Posterior cingulate gyrus (tissue), 11 donors: ENCODE measurements at regions of chr1 and their contacts with region 1.

Region 1: DNA sequence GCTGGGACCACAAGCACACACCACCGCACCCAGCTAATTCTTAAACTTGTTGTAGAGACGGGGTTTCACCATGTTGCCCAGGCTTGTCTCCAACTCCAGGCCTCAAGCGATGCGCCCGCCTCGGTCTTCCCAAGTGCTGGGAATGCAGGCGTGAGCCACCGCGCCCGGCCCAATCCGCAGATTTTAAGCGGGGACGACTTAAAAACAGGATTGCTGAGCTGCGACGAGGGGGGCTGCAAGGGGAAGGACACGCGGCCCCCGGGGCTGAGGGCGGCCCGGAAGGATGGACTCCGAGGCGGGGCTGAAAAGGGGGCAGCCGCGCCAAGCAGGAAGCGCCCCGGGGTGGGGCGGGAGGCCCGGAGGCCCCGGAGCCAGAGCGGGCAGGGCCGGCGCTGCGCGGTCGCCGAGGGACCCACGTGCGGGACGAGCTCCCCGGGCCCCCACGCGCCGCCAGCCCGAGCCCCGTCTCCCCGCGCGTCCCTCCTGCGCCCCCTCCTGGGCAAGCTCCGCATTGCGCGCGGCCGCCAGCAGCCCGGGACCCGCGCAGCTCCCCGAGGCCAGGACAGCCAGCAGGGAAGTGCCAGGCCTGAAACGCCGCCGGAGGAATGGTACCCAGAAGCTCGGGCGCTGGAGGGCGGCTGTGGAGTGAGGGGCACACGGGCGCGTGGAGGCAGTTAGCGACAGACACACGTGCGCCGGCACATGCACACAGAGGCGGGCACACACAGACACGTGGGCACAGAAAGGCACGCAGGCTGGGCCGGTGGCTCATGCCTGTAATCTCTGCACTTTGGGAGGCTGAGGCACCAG is 5.5 kb upstream of the PRKCZ start:
- DNase-seq: peak; percentile 64 to 96 (median 78)

Region 2: DNA sequence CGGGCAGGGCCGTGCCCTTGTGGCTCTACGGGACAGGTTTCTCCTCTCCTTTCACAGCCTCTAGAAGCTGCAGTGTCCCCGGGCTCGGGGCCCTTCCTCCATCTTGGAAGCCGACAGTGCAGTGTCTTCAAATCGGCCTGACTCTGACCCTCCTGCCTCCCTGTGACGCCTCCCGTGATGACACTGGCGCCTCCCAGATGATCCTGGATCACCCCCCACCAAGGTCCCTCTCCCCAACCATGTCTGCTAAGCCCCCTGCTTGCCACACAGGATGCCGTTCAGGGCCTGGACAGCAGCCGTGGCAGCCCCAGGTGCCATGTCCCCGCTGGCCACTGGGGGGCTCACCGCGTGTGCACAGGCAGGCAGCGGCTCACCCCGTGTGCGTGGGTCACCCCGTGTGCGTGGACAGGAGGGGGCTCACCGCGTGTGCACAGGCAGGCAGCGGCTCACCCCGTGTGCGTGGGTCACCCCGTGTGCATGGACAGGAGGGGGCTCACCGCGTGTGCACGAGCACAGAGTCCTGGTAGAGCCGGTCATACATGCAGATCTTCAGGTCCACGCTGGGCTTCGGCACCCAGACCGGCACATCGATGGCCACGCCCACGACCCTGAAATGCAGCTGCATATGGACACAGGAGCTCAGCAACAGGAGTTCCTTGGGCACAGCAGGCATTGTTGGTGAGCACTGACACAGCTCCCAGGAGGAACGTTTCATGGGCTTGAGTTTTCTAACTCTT is 100.7 kb before region 1 on chr1:
- intact Hi-C with region 1: loop called (anchors 5 kb)
- DNase-seq: peak in 9 of 10 donors; percentile 53 to 94 (median 70)

Region 3: DNA sequence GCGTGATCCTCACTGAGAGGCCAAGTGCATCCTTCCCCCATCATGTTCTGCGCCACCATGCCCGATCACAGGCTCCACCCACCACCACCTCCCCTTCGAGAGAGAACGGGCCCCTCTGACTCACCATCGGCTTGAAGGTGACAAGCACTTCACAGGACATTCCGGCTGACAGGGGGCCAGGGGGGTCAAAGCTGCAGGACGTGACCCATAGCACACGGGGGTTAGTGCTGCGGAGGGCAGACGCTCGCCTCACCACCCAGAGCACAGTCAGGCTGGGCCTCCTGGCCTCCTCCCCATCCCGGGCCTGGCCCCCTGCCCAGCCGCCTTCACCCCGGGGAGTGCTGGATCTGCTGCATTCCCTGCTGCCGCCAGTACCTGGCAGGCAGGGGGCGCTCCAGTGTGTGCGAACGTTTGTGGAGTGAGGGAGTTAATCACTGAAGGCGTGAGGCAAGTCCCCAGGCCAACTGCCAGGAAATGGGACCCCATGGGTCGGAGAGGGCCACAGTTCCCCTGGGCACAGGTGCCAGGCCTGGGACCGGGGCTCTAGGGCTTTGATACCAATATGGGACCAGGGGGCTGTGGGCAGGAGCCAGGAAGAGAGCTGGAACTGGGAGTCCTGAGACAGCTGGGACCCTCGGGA is 84.8 kb before region 1 on chr1:
- intact Hi-C with region 1: loop called (anchors 2 kb)
- DNase-seq: peak; percentile 58 to 97 (median 84)